ENCODE measurements at regions of chr2 and their contacts with region 1.

Region 1: DNA sequence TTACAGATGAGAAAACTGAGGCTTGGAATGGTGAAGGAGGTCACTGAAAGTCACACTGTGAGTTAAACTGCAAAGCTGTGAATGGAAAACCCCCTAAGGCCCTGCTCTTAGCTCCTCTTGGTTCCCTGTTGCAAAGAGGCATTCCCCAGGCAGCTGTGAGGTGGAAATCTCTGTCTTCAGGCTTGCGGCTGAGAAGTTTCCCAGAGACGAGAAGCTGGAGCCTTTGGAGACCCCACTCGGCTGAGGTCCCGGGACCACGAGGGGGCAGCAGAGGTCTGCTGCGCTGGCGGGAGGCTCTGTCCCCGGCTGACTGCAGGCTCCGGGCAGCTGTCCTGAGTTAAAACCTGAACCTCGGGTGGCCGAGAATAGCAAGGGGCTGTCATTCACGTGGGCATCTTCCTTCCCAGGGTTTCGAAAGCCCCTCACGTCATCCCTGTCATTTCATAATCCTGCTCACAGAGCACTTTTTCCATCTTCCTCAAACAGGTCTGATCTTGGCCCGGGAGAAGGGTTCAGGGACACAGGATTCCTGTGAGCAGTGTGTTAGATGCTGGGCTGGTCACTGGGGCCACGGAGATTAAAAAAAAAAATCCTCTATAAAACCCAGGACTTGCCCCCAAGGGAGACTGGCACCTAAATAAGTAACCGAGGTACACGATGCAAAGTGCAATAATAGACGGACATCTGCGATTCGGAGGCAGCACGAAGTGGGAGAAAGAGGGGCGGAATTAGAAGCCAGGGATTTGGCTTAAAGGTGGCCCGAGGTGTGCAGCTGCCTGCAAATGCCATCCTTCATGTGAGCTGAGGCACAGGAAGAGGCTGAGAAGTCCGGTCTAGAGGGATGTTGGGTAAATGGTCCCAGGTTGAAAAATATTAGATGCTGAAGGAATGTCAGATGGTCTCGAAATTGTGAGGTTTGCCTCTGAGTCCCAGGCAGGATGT is 24.6 kb upstream of the ATOH8 start:
- DNase-seq: peak; percentile 80
- H3K4me3 Mint-ChIP-seq: no peak overlapping the region
- H3K27ac Mint-ChIP-seq: no peak overlapping the region
- H3K4me1 Mint-ChIP-seq: no peaks in the 10 kb centered on the region
- H3K27me3 Mint-ChIP-seq: peaks cover 3% of the 10 kb centered on the region

Region 2: GRCh38 chr2:85642725-85643124 is 86.4 kb before region 1 on chr2:
- CTCF ChIA-PET with region 1: interaction called, 10 read pairs
- POLR2A ChIA-PET with region 1: no interaction called
- intact Hi-C with region 1: no loop called
- DNase-seq: peak; percentile 36
- H3K4me3 Mint-ChIP-seq: no peak overlapping the region
- H3K27ac Mint-ChIP-seq: peak overlapping the region; percentile 69
- H3K4me1 Mint-ChIP-seq: peaks cover 13% of the 10 kb centered on the region
- H3K27me3 Mint-ChIP-seq: no peaks in the 10 kb centered on the region

Region 3: GRCh38 chr2:85718009-85718391 is 11.2 kb before region 1 on chr2:
- CTCF ChIA-PET with region 1: interaction called, 18 read pairs
- POLR2A ChIA-PET with region 1: no interaction called
- intact Hi-C with region 1: no loop called
- DNase-seq: no peak
- H3K4me3 Mint-ChIP-seq: no peak overlapping the region
- H3K27ac Mint-ChIP-seq: no peak overlapping the region
- H3K4me1 Mint-ChIP-seq: no peaks in the 10 kb centered on the region
- H3K27me3 Mint-ChIP-seq: no peaks in the 10 kb centered on the region

Region 4: DNA sequence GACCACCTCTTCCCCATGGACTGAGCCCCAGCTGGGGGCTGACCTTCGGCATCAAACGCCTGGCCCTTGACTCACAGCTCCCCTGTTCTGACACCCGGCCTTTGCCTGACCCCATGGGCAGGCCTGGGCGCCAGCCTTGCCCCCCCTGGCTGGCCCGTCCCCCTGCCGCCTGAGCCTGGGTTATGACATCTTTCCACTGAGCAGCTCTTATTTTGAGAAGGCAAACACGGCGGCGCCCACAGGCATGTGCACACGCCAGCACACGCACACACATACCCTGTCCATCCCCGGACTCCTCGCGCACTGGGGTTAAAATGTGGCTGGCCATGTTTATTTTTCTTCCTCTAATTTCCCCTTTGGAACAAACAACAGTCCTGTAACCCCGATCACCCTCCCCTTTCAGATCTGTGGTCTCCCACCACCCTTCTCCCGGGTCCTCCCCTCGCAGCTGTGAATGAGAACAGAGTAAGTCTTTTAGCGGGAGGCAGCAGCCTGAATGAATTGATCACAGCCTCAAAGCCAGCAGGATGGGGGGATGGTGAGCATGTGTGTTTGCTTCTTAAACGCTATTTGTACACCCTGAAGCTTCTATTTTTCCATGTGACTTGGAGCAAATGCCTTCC is 12.8 kb after region 1 on chr2:
- CTCF ChIA-PET with region 1: interaction called, 29 read pairs
- POLR2A ChIA-PET with region 1: interaction called, 4 read pairs
- intact Hi-C with region 1: no loop called
- DNase-seq: no peak
- H3K4me3 Mint-ChIP-seq: no peak overlapping the region
- H3K27ac Mint-ChIP-seq: no peak overlapping the region
- H3K4me1 Mint-ChIP-seq: no peaks in the 10 kb centered on the region
- H3K27me3 Mint-ChIP-seq: peaks cover 35% of the 10 kb centered on the region

Region 5: GRCh38 chr2:85750587-85751575 is 21.7 kb after region 1 on chr2:
- CTCF ChIA-PET with region 1: interaction called, 14 read pairs
- POLR2A ChIA-PET with region 1: no interaction called
- intact Hi-C with region 1: no loop called
- DNase-seq: peak; percentile 68
- H3K4me3 Mint-ChIP-seq: no peak overlapping the region
- H3K27ac Mint-ChIP-seq: no peak overlapping the region
- H3K4me1 Mint-ChIP-seq: peaks cover 13% of the 10 kb centered on the region
- H3K27me3 Mint-ChIP-seq: peaks cover 41% of the 10 kb centered on the region

Region 6: GRCh38 chr2:85804583-85804982 is 75.4 kb after region 1 on chr2:
- CTCF ChIA-PET with region 1: interaction called, 12 read pairs
- POLR2A ChIA-PET with region 1: no interaction called
- intact Hi-C with region 1: no loop called
- DNase-seq: peak; percentile 40
- H3K4me3 Mint-ChIP-seq: no peak overlapping the region
- H3K27ac Mint-ChIP-seq: no peak overlapping the region
- H3K4me1 Mint-ChIP-seq: peaks cover 5% of the 10 kb centered on the region
- H3K27me3 Mint-ChIP-seq: peaks cover 6% of the 10 kb centered on the region

Region 7: GRCh38 chr2:85838181-85838580 is 109.0 kb after region 1 on chr2:
- CTCF ChIA-PET with region 1: no interaction called
- POLR2A ChIA-PET with region 1: no interaction called
- intact Hi-C with region 1: no loop called
- DNase-seq: no peak
- H3K4me3 Mint-ChIP-seq: no peak overlapping the region
- H3K27ac Mint-ChIP-seq: no peak overlapping the region
- H3K4me1 Mint-ChIP-seq: peaks cover 8% of the 10 kb centered on the region
- H3K27me3 Mint-ChIP-seq: no peaks in the 10 kb centered on the region

Region 8: DNA sequence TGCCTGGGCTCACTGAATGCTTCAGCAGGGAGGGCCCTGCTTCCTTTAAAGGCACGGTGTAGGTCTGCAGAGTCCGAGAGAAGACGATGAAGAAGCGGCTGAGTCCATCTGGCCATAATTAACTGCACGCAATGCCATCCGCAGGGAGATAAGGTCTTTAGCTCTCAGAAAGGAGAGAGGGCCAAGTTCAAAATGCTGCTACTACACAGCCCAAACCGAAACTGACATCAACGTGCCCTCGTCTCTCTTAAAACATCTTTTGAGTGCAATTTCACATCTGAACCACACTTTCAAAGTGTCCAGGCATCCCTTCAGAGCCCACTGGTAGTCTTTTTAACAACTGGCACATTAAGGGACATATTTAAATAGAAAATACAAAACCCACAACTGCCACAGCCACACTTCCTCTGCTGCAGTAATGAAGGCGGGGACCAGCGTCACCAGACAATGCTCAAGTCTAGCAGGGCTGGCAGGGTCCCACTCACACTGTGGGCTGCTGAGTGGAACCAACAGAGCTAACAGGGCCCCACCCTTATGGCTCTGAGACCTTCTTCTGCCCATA is 123.9 kb after region 1 on chr2:
- CTCF ChIA-PET with region 1: no interaction called
- POLR2A ChIA-PET with region 1: no interaction called
- intact Hi-C with region 1: no loop called
- DNase-seq: peak; percentile 69
- H3K4me3 Mint-ChIP-seq: peak overlapping the region; percentile 77
- H3K27ac Mint-ChIP-seq: peak overlapping the region; percentile 98
- H3K4me1 Mint-ChIP-seq: peaks cover 71% of the 10 kb centered on the region
- H3K27me3 Mint-ChIP-seq: no peaks in the 10 kb centered on the region